ENCODE measurements at regions of chr13 and their contacts with region 1.

Region 1: DNA sequence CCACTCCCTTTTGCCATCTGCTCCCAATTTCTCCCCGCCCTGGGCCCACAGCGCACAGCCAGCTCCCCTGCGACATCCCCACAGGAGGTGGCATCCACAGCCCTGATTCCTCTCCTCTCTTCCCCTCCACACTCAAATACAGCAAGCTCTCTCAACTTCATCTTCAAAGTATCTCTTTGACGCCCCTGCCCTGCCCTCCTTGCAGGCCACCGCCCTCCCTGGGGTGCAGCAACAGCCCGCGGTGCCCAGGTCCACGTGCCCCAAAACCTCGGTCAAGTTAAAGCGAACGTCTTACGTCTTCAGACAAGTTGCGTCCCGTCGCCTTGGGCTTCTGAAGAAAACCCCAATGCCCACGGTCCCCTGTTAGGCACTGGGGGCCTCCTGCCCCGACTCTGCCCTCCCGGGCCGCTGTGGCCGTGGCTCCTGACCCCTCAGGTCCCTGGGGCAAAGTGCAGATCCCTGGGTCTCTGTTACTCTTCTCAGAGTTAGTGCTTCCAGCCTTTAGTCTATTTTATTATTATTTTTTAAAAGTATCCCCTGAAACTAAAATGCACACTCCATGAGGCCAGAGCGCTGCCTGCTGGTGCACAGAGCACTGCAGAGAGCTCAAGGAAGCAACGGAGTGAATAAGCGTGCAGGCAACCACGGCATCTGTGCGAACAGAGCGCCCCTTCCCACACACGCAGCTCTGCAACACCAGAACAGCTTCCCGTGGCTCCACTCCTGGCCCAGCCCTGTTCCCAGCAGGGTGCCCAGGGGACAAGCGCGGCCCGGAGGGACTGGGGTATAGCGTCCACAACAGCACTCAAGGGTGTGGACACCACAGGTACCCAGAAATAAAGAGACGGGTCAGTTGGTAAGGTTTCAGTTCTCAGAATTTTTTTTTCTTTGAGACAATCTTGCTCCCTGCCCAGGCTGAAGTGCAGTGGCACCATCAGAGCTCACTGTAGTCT is 26.4 kb downstream of the IL17D start:
- DNase-seq: no peak
- H3K4me3 ChIP-seq: no peak overlapping the region
- H3K27ac ChIP-seq: no peak overlapping the region
- H3K4me1 ChIP-seq: no peaks in the 10 kb centered on the region
- H3K27me3 ChIP-seq: no peaks in the 10 kb centered on the region
- CTCF ChIP-seq: no peak
- EP300 ChIP-seq: no peak
- POLR2A ChIP-seq: no peak

Region 2: GRCh38 chr13:20353973-20354372 is 375.9 kb before region 1 on chr13:
- in situ Hi-C with region 1: no loop called
- intact Hi-C with region 1: no loop called
- DNase-seq: no peak
- H3K4me3 ChIP-seq: no peak overlapping the region
- H3K27ac ChIP-seq: no peak overlapping the region
- H3K4me1 ChIP-seq: no peaks in the 10 kb centered on the region
- H3K27me3 ChIP-seq: no peaks in the 10 kb centered on the region
- CTCF ChIP-seq: no peak
- EP300 ChIP-seq: no peak
- POLR2A ChIP-seq: no peak

Region 3: GRCh38 chr13:20796791-20797508 is 67.0 kb after region 1 on chr13:
- in situ Hi-C with region 1: loop called in 1 of 4 experiments (anchors 10 kb)
- intact Hi-C with region 1: no loop called
- DNase-seq: no peak
- H3K4me3 ChIP-seq: no peak overlapping the region
- H3K27ac ChIP-seq: no peak overlapping the region
- H3K4me1 ChIP-seq: peaks cover 0 to 5% (median 0%) of the 10 kb centered on the region in 4 donors
- H3K27me3 ChIP-seq: no peaks in the 10 kb centered on the region
- CTCF ChIP-seq: no peak
- EP300 ChIP-seq: no peak
- POLR2A ChIP-seq: no peak

Region 4: DNA sequence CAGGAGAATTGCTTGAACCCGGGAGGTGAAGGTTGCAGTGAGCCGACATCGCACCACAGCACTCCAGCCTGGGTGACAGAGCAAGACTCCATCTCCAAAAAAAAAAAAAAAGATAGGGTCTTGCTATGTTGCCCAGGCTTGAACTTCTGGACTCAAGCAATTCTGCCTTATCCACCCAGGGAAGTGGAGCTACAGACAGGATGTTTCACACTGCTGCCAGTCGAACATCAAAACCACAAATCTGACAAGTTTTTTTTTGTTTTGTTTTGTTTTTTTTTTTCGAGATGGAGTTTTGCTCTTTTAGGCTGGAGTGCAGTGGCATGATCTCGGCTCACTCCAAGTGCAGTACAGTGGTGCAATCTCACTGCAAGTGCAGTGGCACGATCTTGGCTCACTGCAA is 161.9 kb after region 1 on chr13:
- in situ Hi-C with region 1: no loop called
- intact Hi-C with region 1: no loop called
- DNase-seq: no peak
- H3K4me3 ChIP-seq: no peak overlapping the region
- H3K27ac ChIP-seq: no peak overlapping the region
- H3K4me1 ChIP-seq: no peaks in the 10 kb centered on the region
- H3K27me3 ChIP-seq: no peaks in the 10 kb centered on the region
- CTCF ChIP-seq: no peak
- EP300 ChIP-seq: no peak
- POLR2A ChIP-seq: no peak

Measured in transverse colon (tissue), 4 donors.